ENCODE measurements at regions of chr19 and their contacts with region 1.

Region 1: GRCh38 chr19:5790573-5791520 is at the start of gene DUS3L:
- DNase-seq: peak; percentile 91 to 99 (median 94)
- ATAC-seq: peak; percentile 93
- H3K4me3 ChIP-seq: peak within 1 kb of the TSS; percentile 69
- H3K4me3 Mint-ChIP-seq: peak within 1 kb of the TSS; percentile 96
- H3K27ac ChIP-seq: peak within 1 kb of the TSS; percentile 96 to 97
- H3K27ac Mint-ChIP-seq: peak within 1 kb of the TSS; percentile 97
- H3K4me1 ChIP-seq: peaks cover 26% of the 10 kb centered on the region
- H3K4me1 Mint-ChIP-seq: peaks cover 15% of the 10 kb centered on the region
- H3K27me3 ChIP-seq: no peaks in the 10 kb centered on the region
- H3K27me3 Mint-ChIP-seq: no peaks in the 10 kb centered on the region
- CTCF ChIP-seq: no peak
- total RNA-seq, gene DUS3L: 150 to 170 TPM

Region 2: GRCh38 chr19:5622463-5623396 is 168.1 kb before region 1 on chr19 and contains the starts of genes SAFB and SAFB2:
- CTCF ChIA-PET with region 1: no interaction called
- POLR2A ChIA-PET with region 1: interaction called, 17 read pairs
- intact Hi-C with region 1: loop called (anchors 2 to 5 kb)
- DNase-seq: peak; percentile 98 to 100 (median 100)
- ATAC-seq: peak; percentile 79
- H3K4me3 ChIP-seq: peak within 1 kb of the TSS; percentile 85
- H3K4me3 Mint-ChIP-seq: peak within 1 kb of the TSS; percentile 99
- H3K27ac ChIP-seq: peak within 1 kb of the TSS; percentile 90 to 95
- H3K27ac Mint-ChIP-seq: peak within 1 kb of the TSS; percentile 98
- H3K4me1 ChIP-seq: peaks cover 79% of the 10 kb centered on the region
- H3K4me1 Mint-ChIP-seq: peaks cover 84% of the 10 kb centered on the region
- H3K27me3 ChIP-seq: no peaks in the 10 kb centered on the region
- H3K27me3 Mint-ChIP-seq: no peaks in the 10 kb centered on the region
- CTCF ChIP-seq: no peak
- total RNA-seq, gene SAFB: 195 to 200 TPM
- total RNA-seq, gene SAFB2: 238 to 246 TPM

Region 3: DNA sequence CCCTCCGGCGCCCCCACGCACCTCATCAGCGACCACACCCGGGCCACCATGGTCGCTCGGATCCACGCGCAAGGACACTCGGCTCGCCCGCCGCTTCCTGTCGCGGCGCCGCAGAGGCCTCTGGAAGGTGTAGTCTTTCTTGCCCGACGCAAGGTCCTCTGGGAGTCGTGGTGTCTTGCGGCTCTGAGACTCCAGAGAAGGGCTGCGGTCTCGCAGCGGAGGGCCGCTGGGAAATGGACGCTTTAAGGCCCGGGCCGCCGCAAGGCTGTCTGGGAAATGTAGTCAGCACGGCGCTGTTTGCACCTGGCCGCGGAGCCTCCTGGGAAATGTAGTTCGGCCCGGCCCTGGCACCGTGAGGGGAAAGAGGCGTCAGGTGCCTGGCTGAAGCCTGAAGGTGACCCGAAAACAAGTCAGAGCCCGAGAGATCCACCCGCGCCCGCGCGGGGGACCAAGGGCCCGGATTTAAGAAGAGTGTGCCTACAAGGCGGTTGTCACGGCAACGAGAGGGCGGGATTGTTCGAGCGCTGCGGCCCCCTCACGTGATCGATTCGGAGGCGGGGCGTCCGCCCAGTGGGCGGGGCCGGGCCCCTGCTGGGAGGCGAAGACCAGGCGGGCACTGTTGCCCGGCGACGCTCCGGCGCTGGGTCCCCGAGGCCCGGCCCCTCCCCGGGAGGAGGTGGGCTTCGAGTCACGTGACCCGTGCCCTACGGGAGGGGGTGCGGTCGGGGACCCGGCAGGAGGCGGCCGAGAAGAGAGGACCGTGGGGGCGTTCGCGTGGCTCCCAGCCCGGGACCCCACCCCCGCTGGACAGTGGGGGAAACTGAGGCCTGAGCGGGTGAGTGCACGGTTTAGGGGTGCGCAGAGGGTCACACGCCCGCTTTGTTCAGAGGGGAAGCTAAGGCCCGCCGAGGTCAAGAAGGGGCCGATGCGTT is 110.1 kb before region 1 on chr19 and contains the starts of genes HSD11B1L and MICOS13:
- CTCF ChIA-PET with region 1: no interaction called
- POLR2A ChIA-PET with region 1: no interaction called
- intact Hi-C with region 1: loop called in 1 of 2 experiments (anchors 1 kb)
- DNase-seq: peak; percentile 96 to 100 (median 98)
- ATAC-seq: peak; percentile 95
- H3K4me3 ChIP-seq: peak within 1 kb of the TSS; percentile 100
- H3K4me3 Mint-ChIP-seq: peak within 1 kb of the TSS; percentile 99
- H3K27ac ChIP-seq: peak within 1 kb of the TSS; percentile 89 to 100
- H3K27ac Mint-ChIP-seq: peak within 1 kb of the TSS; percentile 95
- H3K4me1 ChIP-seq: peaks cover 24% of the 10 kb centered on the region
- H3K4me1 Mint-ChIP-seq: peaks cover 30% of the 10 kb centered on the region
- H3K27me3 ChIP-seq: no peaks in the 10 kb centered on the region
- H3K27me3 Mint-ChIP-seq: no peaks in the 10 kb centered on the region
- CTCF ChIP-seq: no peak
- total RNA-seq, gene HSD11B1L: 2.4 to 2.9 TPM
- total RNA-seq, gene MICOS13: 21.7 to 23.0 TPM

Region 4: GRCh38 chr19:5690125-5690954 is 100.5 kb before region 1 on chr19 and contains the start of gene RPL36:
- CTCF ChIA-PET with region 1: no interaction called
- POLR2A ChIA-PET with region 1: interaction called, 5 read pairs
- intact Hi-C with region 1: loop called in 1 of 2 experiments (anchors 2 kb)
- DNase-seq: peak; percentile 95 to 100 (median 99)
- ATAC-seq: peak; percentile 65
- H3K4me3 ChIP-seq: peak within 1 kb of the TSS; percentile 100
- H3K4me3 Mint-ChIP-seq: peak within 1 kb of the TSS; percentile 96
- H3K27ac ChIP-seq: peak within 1 kb of the TSS; percentile 91 to 95
- H3K27ac Mint-ChIP-seq: peak within 1 kb of the TSS; percentile 96
- H3K4me1 ChIP-seq: peaks cover 54% of the 10 kb centered on the region
- H3K4me1 Mint-ChIP-seq: peaks cover 43% of the 10 kb centered on the region
- H3K27me3 ChIP-seq: no peaks in the 10 kb centered on the region
- H3K27me3 Mint-ChIP-seq: no peaks in the 10 kb centered on the region
- CTCF ChIP-seq: peak; percentile 98
- total RNA-seq, gene RPL36: 1,509 to 1,565 TPM

Region 5: DNA sequence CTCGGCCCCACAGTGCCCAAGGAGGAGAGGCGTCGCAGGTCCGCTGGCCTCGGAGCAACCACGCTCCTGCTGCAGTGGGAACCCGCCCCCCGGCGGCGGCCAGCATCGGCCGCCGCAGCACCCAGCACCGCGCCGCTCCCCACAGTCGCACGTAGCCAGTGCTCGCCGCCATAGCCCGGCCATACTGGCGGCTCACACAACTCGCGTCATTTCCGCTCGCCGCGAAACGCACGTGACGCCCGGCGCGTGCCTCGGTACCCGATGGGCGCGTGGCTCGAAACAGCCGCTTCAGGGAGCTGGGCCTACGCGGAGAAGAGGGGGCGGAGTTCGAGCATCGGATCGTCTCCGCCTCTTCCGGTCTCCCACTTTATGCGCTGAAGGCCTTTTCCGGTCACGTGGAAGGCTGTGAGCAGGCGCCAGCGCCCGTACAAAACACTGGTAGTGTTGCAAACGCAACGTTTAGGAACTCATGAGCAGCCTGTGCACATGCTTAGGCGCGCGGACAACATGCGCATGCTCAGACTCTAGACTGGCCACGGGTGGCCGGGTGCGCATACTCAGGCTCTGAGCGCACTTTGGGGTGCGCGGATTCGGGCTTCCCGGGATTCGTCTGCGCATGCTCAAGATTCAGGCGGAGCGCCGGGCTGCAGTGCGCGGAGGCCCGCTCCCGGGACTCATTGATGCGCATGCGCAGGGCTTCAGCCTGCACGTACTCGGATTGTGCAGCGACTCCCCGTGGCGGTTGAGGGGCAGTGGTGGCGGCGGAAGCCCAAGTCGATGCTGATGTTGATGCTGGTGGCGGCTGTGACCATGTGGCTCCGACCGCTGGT is 70.7 kb before region 1 on chr19 and contains the starts of genes CATSPERD and LONP1:
- CTCF ChIA-PET with region 1: interaction called, 4 read pairs
- POLR2A ChIA-PET with region 1: interaction called, 15 read pairs
- intact Hi-C with region 1: loop called (anchors 1 to 2 kb)
- DNase-seq: peak; percentile 95 to 100 (median 98)
- ATAC-seq: peak; percentile 86
- H3K4me3 ChIP-seq: peak within 1 kb of the TSS; percentile 69
- H3K4me3 Mint-ChIP-seq: peak within 1 kb of the TSS; percentile 94
- H3K27ac ChIP-seq: peak within 1 kb of the TSS; percentile 82 to 88
- H3K27ac Mint-ChIP-seq: peak within 1 kb of the TSS; percentile 96
- H3K4me1 ChIP-seq: peaks cover 34% of the 10 kb centered on the region
- H3K4me1 Mint-ChIP-seq: peaks cover 26% of the 10 kb centered on the region
- H3K27me3 ChIP-seq: no peaks in the 10 kb centered on the region
- H3K27me3 Mint-ChIP-seq: no peaks in the 10 kb centered on the region
- CTCF ChIP-seq: peak; percentile 83
- total RNA-seq, gene CATSPERD: not detected
- total RNA-seq, gene LONP1: 88.7 to 91.0 TPM

Region 6: DNA sequence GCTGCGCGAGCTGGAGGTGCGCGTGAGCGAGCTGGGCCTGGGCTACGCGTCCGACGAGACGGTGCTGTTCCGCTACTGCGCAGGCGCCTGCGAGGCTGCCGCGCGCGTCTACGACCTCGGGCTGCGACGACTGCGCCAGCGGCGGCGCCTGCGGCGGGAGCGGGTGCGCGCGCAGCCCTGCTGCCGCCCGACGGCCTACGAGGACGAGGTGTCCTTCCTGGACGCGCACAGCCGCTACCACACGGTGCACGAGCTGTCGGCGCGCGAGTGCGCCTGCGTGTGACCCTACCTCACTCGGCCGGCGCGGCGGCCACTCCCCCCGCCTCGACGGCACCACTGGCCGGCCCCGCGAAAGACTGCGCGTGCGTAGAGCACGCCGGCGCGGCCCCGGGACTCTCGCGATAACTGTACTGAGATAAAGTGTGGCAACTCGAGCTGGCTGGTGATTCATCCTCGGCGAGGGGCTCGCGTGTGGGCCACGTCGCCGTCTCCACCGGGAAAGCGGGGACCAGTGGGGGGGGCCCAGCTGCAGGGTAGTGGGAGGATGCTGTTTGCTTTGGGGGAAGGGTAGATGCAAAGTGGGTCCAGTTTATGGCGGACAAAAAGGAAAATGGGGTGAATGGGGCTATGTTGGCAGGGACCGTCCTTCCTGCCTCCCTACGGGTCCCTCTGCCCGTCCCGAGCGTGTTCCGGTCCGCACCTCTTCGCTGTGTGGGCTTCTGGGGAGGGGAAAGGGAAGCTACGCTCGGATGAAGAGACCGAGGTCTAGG is 37.2 kb after region 1 on chr19:
- CTCF ChIA-PET with region 1: no interaction called
- POLR2A ChIA-PET with region 1: interaction called, 15 read pairs
- intact Hi-C with region 1: loop called (anchors 5 kb)
- DNase-seq: peak; percentile 85 to 98 (median 92)
- ATAC-seq: peak; percentile 81
- H3K4me3 ChIP-seq: peak overlapping the region; percentile 86
- H3K4me3 Mint-ChIP-seq: peak overlapping the region; percentile 98
- H3K27ac ChIP-seq: peak overlapping the region; percentile 69 to 86
- H3K27ac Mint-ChIP-seq: peak overlapping the region; percentile 95
- H3K4me1 ChIP-seq: peaks cover 31% of the 10 kb centered on the region
- H3K4me1 Mint-ChIP-seq: peaks cover 18% of the 10 kb centered on the region
- H3K27me3 ChIP-seq: peaks cover 0 to 3% of the 10 kb centered on the region in 2 experiments
- H3K27me3 Mint-ChIP-seq: no peaks in the 10 kb centered on the region
- CTCF ChIP-seq: no peak

Region 7: DNA sequence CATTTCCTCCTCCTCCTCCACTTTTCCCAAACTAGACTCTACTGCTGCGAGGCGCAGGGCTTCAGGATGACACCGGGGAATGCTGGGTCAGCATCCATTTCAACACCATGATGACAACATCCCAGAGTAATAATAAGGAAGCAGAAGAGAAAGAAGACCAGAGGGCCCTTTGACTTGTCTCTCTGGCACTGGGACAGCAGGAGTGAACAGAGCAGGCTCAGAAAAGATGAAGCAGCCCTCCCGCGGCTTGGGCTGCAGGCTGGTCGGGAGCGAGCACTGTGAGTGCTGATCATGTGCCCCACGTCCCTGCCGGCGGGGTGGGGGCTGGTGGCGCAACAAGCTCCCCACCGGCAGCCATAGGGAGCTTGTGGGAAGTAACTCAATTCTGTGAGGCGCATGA is 156.6 kb after region 1 on chr19:
- CTCF ChIA-PET with region 1: no interaction called
- POLR2A ChIA-PET with region 1: no interaction called
- intact Hi-C with region 1: no loop called
- DNase-seq: peak in 2 of 14 experiments; percentile 46 to 47
- ATAC-seq: no peak
- H3K4me3 ChIP-seq: no peak overlapping the region
- H3K4me3 Mint-ChIP-seq: no peak overlapping the region
- H3K27ac ChIP-seq: peak overlapping the region; percentile 36 to 76
- H3K27ac Mint-ChIP-seq: peak overlapping the region; percentile 92
- H3K4me1 ChIP-seq: peaks cover 78% of the 10 kb centered on the region
- H3K4me1 Mint-ChIP-seq: peaks cover 73% of the 10 kb centered on the region
- H3K27me3 ChIP-seq: no peaks in the 10 kb centered on the region
- H3K27me3 Mint-ChIP-seq: no peaks in the 10 kb centered on the region
- CTCF ChIP-seq: no peak

Region 8: GRCh38 chr19:6963937-6964336 is 1173.1 kb after region 1 on chr19:
- CTCF ChIA-PET with region 1: no interaction called
- POLR2A ChIA-PET with region 1: no interaction called
- intact Hi-C with region 1: no loop called
- DNase-seq: peak; percentile 20 to 70 (median 34)
- ATAC-seq: no peak
- H3K4me3 ChIP-seq: no peak overlapping the region
- H3K4me3 Mint-ChIP-seq: no peak overlapping the region
- H3K27ac ChIP-seq: no peak overlapping the region
- H3K27ac Mint-ChIP-seq: no peak overlapping the region
- H3K4me1 ChIP-seq: peaks cover 3% of the 10 kb centered on the region
- H3K4me1 Mint-ChIP-seq: peaks cover 6% of the 10 kb centered on the region
- H3K27me3 ChIP-seq: no peaks in the 10 kb centered on the region
- H3K27me3 Mint-ChIP-seq: no peaks in the 10 kb centered on the region
- CTCF ChIP-seq: peak; percentile 64

Measured in CD4-positive, alpha-beta T cell (primary cell).